ENCODE measurements at regions of chr2 and their contacts with region 1.

Region 1: DNA sequence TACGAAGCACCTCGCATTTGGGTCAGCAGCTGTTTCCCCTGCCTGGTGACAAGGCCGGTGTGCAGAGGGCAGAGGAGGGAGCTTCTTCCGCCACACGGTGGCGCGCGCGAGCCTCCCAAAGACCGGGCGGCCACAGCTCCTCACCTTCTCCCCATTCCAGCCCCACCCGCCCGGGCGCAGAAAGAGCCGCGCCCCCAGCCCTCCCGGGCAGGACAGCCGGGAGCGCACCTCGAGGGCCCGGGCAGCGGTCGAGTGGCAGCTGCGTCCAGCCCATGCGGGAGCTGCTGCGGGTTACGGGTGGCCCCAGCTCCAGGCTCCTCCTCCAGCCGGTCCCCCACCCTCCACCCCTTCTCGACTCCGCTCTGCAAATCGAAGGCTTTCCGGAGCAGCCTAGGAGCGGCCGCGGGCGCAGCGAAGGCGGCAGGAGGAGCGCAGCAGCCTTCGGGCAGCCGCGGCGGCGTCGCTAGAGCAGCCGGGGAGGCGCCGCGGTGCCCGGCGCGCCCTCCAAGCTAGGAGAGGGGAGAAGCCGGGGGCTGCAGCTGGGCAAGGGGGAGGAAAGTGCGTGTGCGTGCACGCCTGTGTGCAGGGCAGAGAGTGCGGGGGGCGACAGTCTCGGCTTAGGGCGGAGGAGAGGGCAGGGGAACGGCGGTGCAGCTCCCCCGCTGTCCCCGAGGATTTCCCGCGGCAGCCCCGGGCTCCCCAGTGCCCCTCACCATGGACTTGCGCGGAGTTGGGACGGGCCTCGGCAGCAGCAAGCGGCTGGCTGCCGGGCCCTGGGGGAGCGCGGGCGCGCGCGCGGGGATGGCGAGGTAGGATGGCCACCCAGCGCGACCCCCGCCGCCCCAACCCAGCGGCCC is at the start of gene CCDC85A:
- DNase-seq: peak; percentile 86
- H3K4me3 ChIP-seq: peak within 1 kb of the TSS; percentile 50 to 92 (median 84)
- H3K27ac ChIP-seq: peak within 1 kb of the TSS; percentile 14
- H3K4me1 ChIP-seq: peaks cover 16% of the 10 kb centered on the region
- H3K27me3 ChIP-seq: no peaks in the 10 kb centered on the region
- CTCF ChIP-seq: peak; percentile 93 to 96
- POLR2A ChIP-seq: no peak
- total RNA-seq, gene CCDC85A: 10.4 and 16.9 TPM in 2 replicates

Region 2: DNA sequence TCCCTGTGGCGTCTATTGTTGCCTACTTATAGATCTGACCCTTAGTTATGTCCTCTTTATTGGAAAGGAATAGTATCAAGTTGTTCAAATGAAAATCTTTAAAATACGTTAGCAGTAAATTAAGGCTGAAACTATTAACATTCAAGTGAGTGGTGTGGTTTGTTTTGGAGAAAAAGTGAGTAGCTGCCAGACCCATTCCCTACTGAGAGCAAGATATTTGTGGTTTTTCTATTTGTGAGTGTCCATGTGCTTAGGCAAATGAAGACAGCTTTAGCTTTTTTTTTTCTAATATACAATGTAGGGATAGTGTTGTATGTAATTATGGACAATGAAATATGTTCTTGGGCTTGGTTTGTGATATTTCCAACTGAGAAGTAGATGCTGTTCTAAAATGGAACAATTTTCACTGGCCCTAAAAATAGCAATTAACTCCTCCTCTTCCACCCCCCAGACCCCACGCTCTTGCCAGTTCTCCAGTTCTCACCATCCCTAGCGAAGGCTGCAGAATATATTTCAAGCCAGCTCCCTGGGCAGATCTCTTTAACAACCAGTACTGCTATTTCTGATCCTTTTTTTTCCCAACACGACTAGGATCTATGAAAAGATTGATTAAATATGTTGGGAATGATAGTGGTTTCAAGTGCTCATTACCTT is 83.0 kb after region 1 on chr2:
- CTCF ChIA-PET with region 1: no interaction called
- POLR2A ChIA-PET with region 1: no interaction called
- dilution Hi-C with region 1: no loop called
- intact Hi-C with region 1: no loop called
- DNase-seq: no peak
- H3K4me3 ChIP-seq: no peak overlapping the region
- H3K27ac ChIP-seq: no peak overlapping the region
- H3K4me1 ChIP-seq: no peaks in the 10 kb centered on the region
- H3K27me3 ChIP-seq: no peaks in the 10 kb centered on the region
- CTCF ChIP-seq: no peak
- POLR2A ChIP-seq: no peak

Region 3: DNA sequence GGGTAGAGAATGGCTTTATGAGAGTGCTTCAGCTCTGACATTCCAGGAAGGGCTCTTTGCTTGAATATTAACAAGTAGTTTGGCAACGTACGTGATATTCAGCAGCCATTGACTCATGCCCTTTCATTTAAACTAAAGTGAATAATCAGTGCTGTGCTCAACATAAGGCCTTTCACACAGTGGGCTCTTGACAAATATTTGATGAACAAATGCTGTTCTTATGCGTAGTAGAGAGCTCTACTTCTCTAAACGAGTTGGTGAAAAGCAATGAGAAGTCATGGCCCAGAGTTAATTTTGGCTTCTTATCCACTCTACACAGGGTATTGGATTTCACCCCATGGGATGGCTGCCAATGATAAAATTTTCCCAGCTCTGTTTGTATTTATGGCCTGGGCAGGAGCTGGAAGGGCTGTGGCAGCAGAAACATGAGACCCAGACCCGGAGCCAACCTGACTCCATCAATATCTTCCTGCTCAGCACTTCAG is 338.8 kb after region 1 on chr2:
- CTCF ChIA-PET with region 1: interaction called, 4 read pairs
- POLR2A ChIA-PET with region 1: no interaction called
- dilution Hi-C with region 1: no loop called
- intact Hi-C with region 1: loop called (anchors 10 kb)
- DNase-seq: no peak
- H3K4me3 ChIP-seq: no peak overlapping the region
- H3K27ac ChIP-seq: no peak overlapping the region
- H3K4me1 ChIP-seq: no peaks in the 10 kb centered on the region
- H3K27me3 ChIP-seq: peaks cover 0 to 2% of the 10 kb centered on the region in 2 experiments
- CTCF ChIP-seq: no peak
- POLR2A ChIP-seq: no peak

Region 4: GRCh38 chr2:56680971-56681631 is 497.2 kb after region 1 on chr2:
- CTCF ChIA-PET with region 1: interaction called, 7 read pairs
- POLR2A ChIA-PET with region 1: no interaction called
- dilution Hi-C with region 1: no loop called
- intact Hi-C with region 1: loop called (anchors 2 kb)
- DNase-seq: peak; percentile 72
- H3K4me3 ChIP-seq: no peak overlapping the region
- H3K27ac ChIP-seq: peak overlapping the region; percentile 84
- H3K4me1 ChIP-seq: peaks cover 26% of the 10 kb centered on the region
- H3K27me3 ChIP-seq: no peaks in the 10 kb centered on the region
- CTCF ChIP-seq: no peak
- POLR2A ChIP-seq: peak; percentile 35

Region 5: GRCh38 chr2:56749152-56749752 is 565.4 kb after region 1 on chr2:
- CTCF ChIA-PET with region 1: interaction called, 115 read pairs
- POLR2A ChIA-PET with region 1: no interaction called
- dilution Hi-C with region 1: no loop called
- intact Hi-C with region 1: loop called (anchors 1 kb)
- DNase-seq: peak; percentile 55
- H3K4me3 ChIP-seq: no peak overlapping the region
- H3K27ac ChIP-seq: no peak overlapping the region
- H3K4me1 ChIP-seq: no peaks in the 10 kb centered on the region
- H3K27me3 ChIP-seq: no peaks in the 10 kb centered on the region
- CTCF ChIP-seq: peak; percentile 25 to 29
- POLR2A ChIP-seq: no peak

Region 6: DNA sequence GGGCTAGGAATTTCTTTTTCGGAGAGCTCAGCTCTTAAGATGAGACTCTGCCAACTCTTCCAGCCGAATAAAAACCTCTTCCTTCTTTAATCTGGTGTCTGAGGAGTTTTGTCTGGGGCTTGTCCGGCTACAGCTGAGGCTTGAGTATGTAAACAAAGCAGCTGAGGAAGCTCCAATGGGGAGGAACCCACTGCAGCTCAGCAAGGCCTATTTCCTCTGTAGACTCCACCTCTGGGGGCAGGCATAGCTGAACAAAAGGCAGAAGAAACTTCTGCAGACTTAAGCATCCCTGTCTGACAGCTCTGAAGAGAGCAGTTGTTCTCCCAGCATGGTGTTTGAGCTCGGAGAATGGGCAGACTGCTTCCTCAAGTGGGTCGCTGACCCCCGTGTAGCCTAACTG is 838.6 kb after region 1 on chr2:
- CTCF ChIA-PET with region 1: interaction called, 10 read pairs
- POLR2A ChIA-PET with region 1: no interaction called
- dilution Hi-C with region 1: no loop called
- intact Hi-C with region 1: no loop called
- DNase-seq: no peak
- H3K4me3 ChIP-seq: no peak overlapping the region
- H3K27ac ChIP-seq: no peak overlapping the region
- H3K4me1 ChIP-seq: no peaks in the 10 kb centered on the region
- H3K27me3 ChIP-seq: no peaks in the 10 kb centered on the region
- CTCF ChIP-seq: no peak
- POLR2A ChIP-seq: no peak

Region 7: GRCh38 chr2:57376985-57377384 is 1193.1 kb after region 1 on chr2:
- CTCF ChIA-PET with region 1: no interaction called
- POLR2A ChIA-PET with region 1: no interaction called
- dilution Hi-C with region 1: no loop called
- intact Hi-C with region 1: loop called (anchors 2 kb)
- DNase-seq: peak; percentile 4
- H3K4me3 ChIP-seq: no peak overlapping the region
- H3K27ac ChIP-seq: no peak overlapping the region
- H3K4me1 ChIP-seq: peaks cover 17% of the 10 kb centered on the region
- H3K27me3 ChIP-seq: no peaks in the 10 kb centered on the region
- CTCF ChIP-seq: no peak
- POLR2A ChIP-seq: no peak

Region 8: DNA sequence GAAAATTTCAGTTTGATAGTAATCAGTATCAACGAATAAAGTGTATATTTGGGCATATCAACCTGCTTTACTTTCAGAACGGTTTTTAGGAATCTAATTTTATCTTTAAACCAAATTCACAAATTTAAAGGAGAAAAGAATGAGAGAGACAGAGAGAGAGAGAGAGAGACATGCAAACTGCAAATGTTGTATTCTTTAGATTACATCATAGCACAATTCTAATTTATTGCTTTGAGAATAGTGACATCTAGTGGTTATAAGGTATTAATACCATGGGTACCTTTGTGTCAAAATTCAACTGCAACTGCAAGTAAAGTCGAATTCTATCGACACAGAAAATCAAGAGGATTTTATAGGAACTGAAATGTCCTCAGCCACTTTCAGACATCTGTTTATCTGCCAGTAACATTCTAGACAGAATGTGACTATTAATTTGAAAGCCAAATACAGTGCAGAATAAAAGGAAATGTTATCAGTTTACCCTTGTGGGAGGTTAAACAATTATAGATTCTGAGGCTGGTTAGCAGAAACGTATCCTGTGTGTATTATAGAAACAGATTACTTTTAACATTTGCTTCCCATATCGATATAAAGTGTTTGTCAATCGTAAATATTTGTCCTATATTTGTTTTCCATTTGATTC is 1332.9 kb after region 1 on chr2:
- CTCF ChIA-PET with region 1: interaction called, 16 read pairs
- POLR2A ChIA-PET with region 1: no interaction called
- dilution Hi-C with region 1: no loop called
- intact Hi-C with region 1: loop called (anchors 1 kb)
- DNase-seq: peak; percentile 58
- H3K4me3 ChIP-seq: no peak overlapping the region
- H3K27ac ChIP-seq: no peak overlapping the region
- H3K4me1 ChIP-seq: no peaks in the 10 kb centered on the region
- H3K27me3 ChIP-seq: peaks cover 0 to 1% of the 10 kb centered on the region in 2 experiments
- CTCF ChIP-seq: peak; percentile 16 to 24
- POLR2A ChIP-seq: no peak

Measured in endothelial cell of umbilical vein (primary cell).